Breast epithelium (tissue), 4 donors: ENCODE measurements at regions of chr9 and their contacts with region 1.

Region 1: DNA sequence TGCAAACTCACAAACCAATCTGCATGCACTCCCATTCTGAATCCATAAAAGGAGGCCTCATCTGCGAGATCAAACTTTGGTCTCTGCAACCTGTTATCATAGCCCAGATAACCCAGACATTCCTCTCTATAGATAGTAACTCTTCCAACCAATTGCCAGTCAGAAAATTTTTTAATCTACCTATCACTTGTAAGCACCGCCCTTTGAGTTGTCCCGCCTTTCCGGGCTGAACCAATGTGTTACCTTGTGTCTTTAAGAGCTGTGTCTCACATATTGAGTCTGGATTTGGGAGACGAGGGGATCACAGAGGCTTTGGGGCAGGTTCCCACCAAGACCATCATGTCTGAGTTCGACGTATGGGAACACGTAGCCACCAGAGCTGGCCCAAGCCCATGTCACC is 91.1 kb upstream of the PPP1R26 start:
- DNase-seq: no peak
- H3K4me3 ChIP-seq: no peak overlapping the region
- H3K27ac ChIP-seq: no peak overlapping the region
- H3K4me1 ChIP-seq: no peaks in the 10 kb centered on the region
- H3K27me3 ChIP-seq: peaks cover 0 to 21% of the 10 kb centered on the region in 2 donors
- CTCF ChIP-seq: no peak
- POLR2A ChIP-seq: no peak

Region 2: DNA sequence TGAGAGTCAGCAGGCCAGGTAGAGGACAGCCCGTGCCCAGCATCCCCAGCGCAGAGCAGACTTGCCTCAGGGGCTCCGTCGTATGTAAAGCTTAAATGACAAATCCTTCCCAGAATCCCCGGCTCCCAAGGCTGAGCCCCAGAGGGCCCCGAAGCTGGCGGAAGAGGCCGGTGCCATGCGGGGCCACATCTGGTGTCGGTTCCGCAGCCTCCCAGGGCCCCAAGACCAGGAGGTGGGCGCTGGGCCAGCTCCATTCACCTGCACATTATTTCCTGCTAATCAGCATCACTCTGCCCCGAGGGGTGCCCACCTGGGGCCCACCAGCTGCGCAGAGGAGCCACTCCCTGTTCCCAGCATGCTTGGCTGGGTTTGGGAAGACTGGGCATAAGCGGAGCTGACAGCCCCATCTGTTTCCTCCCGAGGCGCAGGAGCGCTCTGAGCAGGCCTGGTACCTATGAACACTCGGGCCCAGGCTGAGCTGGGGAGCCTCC is 33.0 kb before region 1 on chr9:
- intact Hi-C with region 1: loop called (anchors 1 kb)
- DNase-seq: no peak
- H3K4me3 ChIP-seq: no peak overlapping the region
- H3K27ac ChIP-seq: no peak overlapping the region
- H3K4me1 ChIP-seq: no peaks in the 10 kb centered on the region
- H3K27me3 ChIP-seq: peaks cover 0 to 15% of the 10 kb centered on the region in 2 donors
- CTCF ChIP-seq: no peak
- POLR2A ChIP-seq: no peak

Region 3: DNA sequence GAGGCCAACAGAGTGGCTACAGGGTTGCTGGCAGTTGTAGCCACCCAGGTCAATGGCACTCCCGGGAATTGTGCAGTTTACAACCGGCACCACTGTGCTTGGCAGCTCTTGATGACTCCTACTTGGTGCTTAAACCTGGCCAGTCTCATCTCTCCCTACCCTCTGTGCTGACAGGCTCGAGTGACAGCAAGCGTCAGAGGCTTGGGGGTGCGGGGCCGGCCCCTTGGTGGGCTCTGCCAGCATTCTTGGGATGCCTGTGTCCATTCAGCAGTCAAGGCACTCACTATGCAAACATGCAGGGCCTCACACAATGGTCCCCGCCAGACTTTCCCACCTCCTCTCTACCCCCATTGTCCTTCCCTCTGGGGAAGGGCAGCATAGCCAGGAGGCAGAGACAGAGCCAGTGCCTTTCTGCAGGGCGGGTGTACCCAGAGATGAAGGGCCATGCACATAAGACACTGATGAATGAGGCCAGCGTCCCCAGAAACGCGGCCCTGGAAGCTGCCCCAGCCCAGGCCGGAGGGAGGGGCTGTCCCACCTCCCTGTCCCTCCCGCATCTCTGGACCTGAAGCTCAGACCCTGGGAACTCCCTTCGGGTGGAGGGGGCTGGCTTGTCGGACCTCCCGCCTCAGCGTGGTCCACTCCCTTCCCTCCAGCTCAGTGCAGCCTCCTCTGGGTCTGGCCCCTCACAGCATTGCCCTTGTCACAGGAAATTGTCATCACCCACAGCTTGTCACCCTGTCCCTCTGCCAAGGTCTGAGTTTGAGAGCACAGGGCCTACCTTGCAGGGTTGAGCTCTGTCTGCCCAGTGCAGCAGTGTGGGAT is 1183.7 kb after region 1 on chr9:
- intact Hi-C with region 1: no loop called
- DNase-seq: no peak
- H3K4me3 ChIP-seq: no peak overlapping the region
- H3K27ac ChIP-seq: no peak overlapping the region
- H3K4me1 ChIP-seq: peaks cover 0 to 10% of the 10 kb centered on the region in 2 donors
- H3K27me3 ChIP-seq: no peaks in the 10 kb centered on the region
- CTCF ChIP-seq: no peak
- POLR2A ChIP-seq: no peak